Gastrocnemius medialis (tissue), 4 donors: ENCODE measurements at regions of chr2 and their contacts with region 1.

Region 1: GRCh38 chr2:225660262-225661131 is 261.0 kb downstream of the NYAP2 start:
- DNase-seq: peak in 1 of 2 donors; percentile 33
- ATAC-seq: peak in 1 of 2 donors; percentile 56
- H3K4me3 ChIP-seq: no peak overlapping the region
- H3K27ac ChIP-seq: no peak overlapping the region
- H3K4me1 ChIP-seq: no peaks in the 10 kb centered on the region
- H3K27me3 ChIP-seq: no peaks in the 10 kb centered on the region
- CTCF ChIP-seq: peak in 4 of 5 experiments; percentile 51 to 79 (median 65)
- POLR2A ChIP-seq: no peak

Region 2: DNA sequence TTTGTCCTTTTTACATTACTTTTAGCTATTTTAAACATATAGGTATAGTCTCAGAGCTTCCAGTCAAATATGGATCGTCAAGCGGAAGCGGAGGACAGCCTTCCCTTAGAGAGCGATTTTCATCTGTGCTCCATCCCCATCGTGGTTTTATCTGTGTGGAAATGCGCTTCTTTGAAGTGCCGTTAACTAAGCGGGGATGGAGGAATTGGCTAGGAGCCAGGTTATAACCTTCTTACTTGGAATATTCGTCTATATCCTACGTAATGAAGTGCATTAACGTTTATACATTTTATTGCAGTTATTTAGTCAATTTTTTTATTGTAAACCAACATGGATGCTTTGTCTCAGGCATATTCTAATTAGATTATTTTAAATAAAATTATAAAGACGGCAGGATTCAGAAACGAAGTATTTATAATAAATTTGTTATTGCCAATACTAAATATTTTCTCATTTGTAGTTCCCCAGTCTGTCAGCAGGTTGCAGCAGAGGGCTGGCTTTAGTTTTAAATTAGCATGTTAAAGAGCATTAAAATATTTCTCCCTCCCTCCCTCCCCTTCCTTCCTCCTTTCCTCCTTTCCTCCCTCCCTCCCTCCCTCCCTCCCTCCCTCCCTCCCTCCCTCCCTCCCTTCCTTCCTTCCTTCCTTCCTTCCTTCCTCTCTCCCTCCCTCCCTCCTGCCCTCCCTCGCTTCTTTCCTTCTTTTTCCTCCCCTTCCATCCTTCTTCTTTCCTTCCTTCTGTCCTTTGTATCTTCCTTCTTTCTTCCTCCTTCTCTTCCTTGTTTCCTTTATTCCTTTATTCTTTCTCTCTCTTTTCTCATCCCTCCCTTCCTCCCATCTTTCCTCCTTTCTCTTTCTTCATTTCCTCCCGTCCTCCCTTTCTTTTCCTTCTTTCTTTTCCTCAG is 537.7 kb before region 1 on chr2:
- in situ Hi-C with region 1: loop called in 1 of 4 experiments (anchors 25 kb)
- intact Hi-C with region 1: loop called (anchors 10 kb)
- DNase-seq: no peak
- ATAC-seq: no peak
- H3K4me3 ChIP-seq: no peak overlapping the region
- H3K27ac ChIP-seq: no peak overlapping the region
- H3K4me1 ChIP-seq: no peaks in the 10 kb centered on the region
- H3K27me3 ChIP-seq: no peaks in the 10 kb centered on the region
- CTCF ChIP-seq: peak in 1 of 5 experiments; percentile 10
- POLR2A ChIP-seq: no peak

Region 3: DNA sequence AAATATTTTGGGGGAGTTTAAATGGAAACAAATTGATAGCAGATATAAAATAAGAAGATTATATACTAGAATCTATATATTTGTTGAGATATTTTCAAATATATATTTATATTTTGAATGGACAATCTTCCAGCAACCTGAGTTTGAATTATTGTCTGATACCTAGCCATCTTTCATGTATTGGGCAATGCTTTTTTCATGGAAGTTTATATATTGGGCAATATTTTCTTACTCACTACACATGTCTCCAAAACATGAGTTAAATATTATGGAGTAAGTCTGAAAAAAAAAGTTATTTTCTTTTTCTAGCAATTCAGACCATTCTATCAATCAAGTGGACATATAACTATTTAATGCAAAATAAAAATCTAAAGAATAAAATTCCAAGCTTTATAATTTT is 34.2 kb after region 1 on chr2:
- in situ Hi-C with region 1: no loop called
- intact Hi-C with region 1: no loop called
- DNase-seq: no peak
- ATAC-seq: no peak
- H3K4me3 ChIP-seq: no peak overlapping the region
- H3K27ac ChIP-seq: no peak overlapping the region
- H3K4me1 ChIP-seq: no peaks in the 10 kb centered on the region
- H3K27me3 ChIP-seq: no peaks in the 10 kb centered on the region
- CTCF ChIP-seq: no peak
- POLR2A ChIP-seq: no peak

Region 4: GRCh38 chr2:226813148-226813701 is 1152.7 kb after region 1 on chr2:
- in situ Hi-C with region 1: loop called in 2 of 4 experiments (anchors 10 kb)
- intact Hi-C with region 1: no loop called
- DNase-seq: no peak
- ATAC-seq: no peak
- H3K4me3 ChIP-seq: no peak overlapping the region
- H3K27ac ChIP-seq: no peak overlapping the region
- H3K4me1 ChIP-seq: no peaks in the 10 kb centered on the region
- H3K27me3 ChIP-seq: no peaks in the 10 kb centered on the region
- CTCF ChIP-seq: no peak
- POLR2A ChIP-seq: no peak